Vagina (tissue), 2 donors: ENCODE measurements at regions of chr19 and their contacts with region 1.

Region 1: DNA sequence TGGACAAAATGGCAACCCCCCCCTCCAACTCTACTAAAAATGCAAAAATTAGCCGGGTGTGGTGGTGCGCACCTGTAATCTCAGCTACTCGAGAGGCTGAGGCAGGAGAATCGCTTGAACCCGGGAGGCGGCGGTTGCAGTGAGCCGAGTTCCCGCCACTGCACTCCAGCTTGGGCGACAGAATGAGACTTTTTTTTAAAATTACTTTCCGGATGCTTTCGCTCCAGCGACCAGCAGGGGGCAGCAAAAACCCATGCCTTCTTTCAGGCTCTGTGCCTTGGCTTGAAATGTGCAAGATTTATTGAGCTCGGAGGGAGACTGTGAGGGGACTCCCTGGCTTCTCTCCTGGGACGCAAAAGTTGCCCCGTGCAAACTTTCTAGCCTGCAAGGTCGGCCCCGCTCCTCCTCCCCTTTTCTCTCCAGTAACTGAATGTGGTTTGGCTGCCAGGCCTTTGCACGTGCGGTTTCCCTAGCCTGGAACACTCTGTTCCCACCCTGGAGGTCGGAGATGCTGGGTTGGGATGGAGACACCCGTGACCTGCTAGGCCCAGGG is 61.4 kb upstream of the NFIC start:
- DNase-seq: no peak
- H3K4me3 ChIP-seq: no peak overlapping the region
- H3K27ac ChIP-seq: no peak overlapping the region
- H3K4me1 ChIP-seq: no peaks in the 10 kb centered on the region
- H3K27me3 ChIP-seq: no peaks in the 10 kb centered on the region
- CTCF ChIP-seq: peak; percentile 79 to 90 (median 83)
- POLR2A ChIP-seq: no peak

Region 2: GRCh38 chr19:2337329-2338043 is 967.5 kb before region 1 on chr19:
- intact Hi-C with region 1: no loop called
- DNase-seq: no peak
- H3K4me3 ChIP-seq: no peak overlapping the region
- H3K27ac ChIP-seq: no peak overlapping the region
- H3K4me1 ChIP-seq: peaks cover 11% of the 10 kb centered on the region
- H3K27me3 ChIP-seq: no peaks in the 10 kb centered on the region
- CTCF ChIP-seq: peak in 1 of 3 experiments; percentile 13
- POLR2A ChIP-seq: no peak

Region 3: GRCh38 chr19:3471954-3472655 is 167.2 kb after region 1 on chr19:
- intact Hi-C with region 1: loop called (anchors 2 kb)
- DNase-seq: no peak
- H3K4me3 ChIP-seq: no peak overlapping the region
- H3K27ac ChIP-seq: no peak overlapping the region
- H3K4me1 ChIP-seq: peaks cover 15% of the 10 kb centered on the region
- H3K27me3 ChIP-seq: no peaks in the 10 kb centered on the region
- CTCF ChIP-seq: peak; percentile 59 to 90 (median 87)
- POLR2A ChIP-seq: no peak

Region 4: DNA sequence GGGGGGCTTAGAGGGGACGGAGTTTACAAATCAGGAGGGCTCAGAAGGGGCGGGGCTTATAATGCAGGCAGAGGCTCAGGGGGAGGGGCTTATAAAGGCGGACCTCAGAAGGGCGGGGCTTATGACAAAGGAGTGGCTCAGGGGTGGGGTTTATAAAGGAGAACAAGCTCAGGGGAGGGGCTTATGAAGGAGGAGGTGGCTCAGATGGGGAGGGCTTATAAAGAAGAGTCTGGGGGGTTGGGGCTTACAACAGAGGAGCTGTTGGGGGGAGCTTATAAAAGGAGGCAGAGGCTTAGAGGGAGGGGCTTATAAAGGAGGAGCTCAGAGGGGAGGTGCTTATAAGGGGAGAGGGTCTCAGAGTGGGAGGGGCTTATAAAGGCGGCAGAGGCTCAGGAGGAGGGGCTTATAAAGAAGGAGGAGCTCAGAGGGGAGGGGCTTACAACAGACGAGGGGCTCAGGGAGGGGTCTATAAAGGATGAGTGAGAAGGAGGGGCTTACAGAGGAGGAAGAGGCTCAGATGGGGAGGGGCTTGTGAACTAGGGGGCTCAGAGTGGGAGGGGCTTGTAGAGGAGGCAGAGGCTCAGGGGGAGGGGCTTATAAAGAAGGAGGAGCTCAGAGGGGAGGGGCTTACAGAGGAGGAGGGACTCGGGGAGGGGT is 174.4 kb after region 1 on chr19:
- intact Hi-C with region 1: loop called (anchors 1 kb)
- DNase-seq: no peak
- H3K4me3 ChIP-seq: no peak overlapping the region
- H3K27ac ChIP-seq: no peak overlapping the region
- H3K4me1 ChIP-seq: no peaks in the 10 kb centered on the region
- H3K27me3 ChIP-seq: no peaks in the 10 kb centered on the region
- CTCF ChIP-seq: no peak
- POLR2A ChIP-seq: no peak